WTC11 (cell line): ENCODE measurements at regions of chr10 and their contacts with region 1.

Region 1: GRCh38 chr10:78047314-78047891 is 13.7 kb downstream of the RPS24 start:
- DNase-seq: peak; percentile 97
- ATAC-seq: peak; percentile 65
- H3K4me3 Mint-ChIP-seq: no peak overlapping the region
- H3K27ac Mint-ChIP-seq: no peak overlapping the region
- H3K4me1 Mint-ChIP-seq: peaks cover 33% of the 10 kb centered on the region
- H3K27me3 Mint-ChIP-seq: no peaks in the 10 kb centered on the region
- CTCF ChIP-seq: peak; percentile 92

Region 2: DNA sequence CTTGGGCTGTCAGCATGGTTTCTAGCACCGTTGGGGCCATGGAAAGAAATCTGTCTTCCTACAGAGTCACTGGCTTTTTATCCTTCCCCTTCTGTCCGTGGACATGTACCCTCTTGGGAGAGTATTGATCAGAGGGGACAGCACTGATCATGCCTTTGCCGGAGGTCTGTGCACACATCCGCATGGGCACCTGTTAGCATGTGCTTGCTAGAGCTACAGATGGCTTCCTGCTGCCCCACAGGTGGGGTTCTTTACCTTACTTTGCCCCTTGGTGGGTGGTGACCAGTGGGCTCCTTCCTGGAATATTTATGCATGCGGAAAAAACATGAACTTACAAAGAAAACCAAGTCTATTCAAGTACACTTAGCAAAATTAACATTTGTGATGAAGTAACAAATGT is 11.2 kb after region 1 on chr10:
- CTCF ChIA-PET with region 1: interaction called, 11 read pairs
- POLR2A ChIA-PET with region 1: no interaction called
- DNase-seq: no peak
- ATAC-seq: no peak
- H3K4me3 Mint-ChIP-seq: no peak overlapping the region
- H3K27ac Mint-ChIP-seq: no peak overlapping the region
- H3K4me1 Mint-ChIP-seq: no peaks in the 10 kb centered on the region
- H3K27me3 Mint-ChIP-seq: no peaks in the 10 kb centered on the region
- CTCF ChIP-seq: no peak

Region 3: DNA sequence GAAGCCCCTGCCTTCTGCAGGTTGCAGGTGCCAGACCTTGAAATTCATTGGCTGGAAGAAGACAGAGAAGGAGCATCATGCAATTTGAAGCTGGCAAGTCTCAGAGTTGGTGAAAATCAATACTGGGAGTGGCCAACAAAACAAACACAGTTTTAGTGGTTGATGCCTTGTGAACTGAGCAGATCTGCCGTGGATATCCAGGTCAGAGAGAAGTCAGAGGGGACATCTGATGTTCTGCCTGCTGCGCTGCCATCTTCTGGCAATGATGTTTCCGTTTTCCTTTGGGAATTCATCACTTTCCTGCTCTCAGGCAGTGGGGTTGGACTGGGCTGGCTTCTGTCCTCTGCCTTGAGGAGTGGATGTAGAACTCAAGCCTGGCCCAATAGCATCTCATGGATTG is 118.2 kb after region 1 on chr10:
- CTCF ChIA-PET with region 1: interaction called, 39 read pairs
- POLR2A ChIA-PET with region 1: interaction called, 4 read pairs
- DNase-seq: peak; percentile 36
- ATAC-seq: peak; percentile 78
- H3K4me3 Mint-ChIP-seq: no peak overlapping the region
- H3K27ac Mint-ChIP-seq: no peak overlapping the region
- H3K4me1 Mint-ChIP-seq: peaks cover 20% of the 10 kb centered on the region
- H3K27me3 Mint-ChIP-seq: no peaks in the 10 kb centered on the region; the same call in 1 of the 2 replicates
- CTCF ChIP-seq: no peak

Region 4: GRCh38 chr10:78218798-78219490 is 171.5 kb after region 1 on chr10:
- CTCF ChIA-PET with region 1: interaction called, 11 read pairs
- POLR2A ChIA-PET with region 1: no interaction called
- DNase-seq: no peak
- ATAC-seq: no peak
- H3K4me3 Mint-ChIP-seq: no peak overlapping the region
- H3K27ac Mint-ChIP-seq: no peak overlapping the region
- H3K4me1 Mint-ChIP-seq: peaks cover 3% of the 10 kb centered on the region
- H3K27me3 Mint-ChIP-seq: no peaks in the 10 kb centered on the region
- CTCF ChIP-seq: no peak

Region 5: DNA sequence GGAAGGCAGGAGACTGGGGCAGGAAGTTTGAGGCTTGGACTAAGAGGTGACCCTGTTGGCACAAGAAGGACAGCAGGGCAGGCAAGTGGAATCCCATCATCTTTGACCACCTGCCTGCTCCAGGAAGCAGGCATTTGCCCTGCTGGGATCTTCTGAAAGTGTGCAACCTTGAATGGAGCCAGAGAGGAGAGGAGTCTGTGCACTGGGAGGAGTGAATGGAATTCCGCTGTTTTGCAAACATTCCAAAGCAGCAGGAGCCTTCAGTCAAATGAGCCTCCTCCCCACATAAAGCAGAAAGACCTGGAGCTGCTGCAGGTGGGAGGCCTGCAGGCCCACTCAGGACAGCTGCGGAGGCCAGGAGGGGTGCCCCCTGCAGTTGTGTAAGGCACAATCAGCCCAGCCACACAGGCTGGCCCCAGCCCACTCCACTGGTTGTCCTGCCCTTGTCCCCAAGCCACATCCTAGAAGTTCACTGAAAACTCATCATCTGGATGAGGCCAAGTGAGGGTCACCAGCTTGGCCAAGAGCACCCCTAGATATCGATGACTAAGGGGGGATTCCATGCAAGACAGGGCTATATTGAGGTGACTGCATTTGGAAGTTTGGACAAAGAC is 235.8 kb after region 1 on chr10:
- CTCF ChIA-PET with region 1: interaction called, 12 read pairs
- POLR2A ChIA-PET with region 1: no interaction called
- DNase-seq: no peak
- ATAC-seq: peak; percentile 74
- H3K4me3 Mint-ChIP-seq: no peak overlapping the region
- H3K27ac Mint-ChIP-seq: peak overlapping the region; percentile 74; the same call in 1 of the 2 replicates
- H3K4me1 Mint-ChIP-seq: peaks cover 32% of the 10 kb centered on the region
- H3K27me3 Mint-ChIP-seq: peaks cover 7% of the 10 kb centered on the region
- CTCF ChIP-seq: no peak

Region 6: DNA sequence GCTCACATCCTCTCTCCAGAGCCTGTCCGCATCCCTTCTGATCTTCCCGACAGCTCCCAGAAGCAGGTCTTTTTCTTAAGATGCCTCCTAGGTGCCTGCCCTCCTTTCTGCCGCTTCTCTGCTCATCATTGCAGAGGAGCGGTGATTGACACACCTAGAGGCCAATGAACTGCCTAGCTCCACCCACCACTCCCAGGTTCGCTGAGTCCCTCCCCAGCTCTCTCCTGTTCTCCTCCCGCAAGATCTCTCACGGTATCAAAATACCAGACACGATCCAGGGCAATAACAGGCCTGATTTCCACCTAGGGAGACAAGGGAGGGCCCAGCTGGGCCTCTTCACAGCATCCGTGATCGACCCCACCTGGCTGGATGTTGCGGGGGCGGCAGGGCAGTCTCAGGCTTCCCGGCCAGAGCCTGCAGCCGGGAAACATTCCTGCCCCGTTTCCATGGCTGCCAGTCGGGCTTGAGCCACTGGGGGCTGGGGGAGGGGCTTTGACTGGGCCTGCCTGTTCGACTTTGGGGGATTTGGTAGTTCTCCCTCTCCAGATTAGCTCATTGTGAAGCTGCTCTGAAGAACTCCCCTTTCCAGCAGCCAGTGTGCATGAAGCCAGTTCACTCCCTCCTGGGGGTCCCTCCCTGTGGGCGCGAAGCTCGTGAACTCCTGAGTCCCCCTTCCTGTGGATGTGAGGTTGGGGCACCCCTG is 359.8 kb after region 1 on chr10:
- CTCF ChIA-PET with region 1: interaction called, 12 read pairs
- POLR2A ChIA-PET with region 1: no interaction called
- DNase-seq: peak; percentile 95
- ATAC-seq: peak; percentile 98
- H3K4me3 Mint-ChIP-seq: peak overlapping the region; percentile 82
- H3K27ac Mint-ChIP-seq: peak overlapping the region; percentile 58
- H3K4me1 Mint-ChIP-seq: peaks cover 13% of the 10 kb centered on the region
- H3K27me3 Mint-ChIP-seq: peaks cover 23% of the 10 kb centered on the region
- CTCF ChIP-seq: no peak